OCI-LY7 (cell line): ENCODE measurements at regions of chr18 and their contacts with region 1.

Region 1: GRCh38 chr18:58438161-58438957 is 190.5 kb downstream of the ALPK2 start:
- DNase-seq: peak; percentile 0
- H3K4me3 ChIP-seq: peak overlapping the region; percentile 12
- H3K27ac ChIP-seq: no peak overlapping the region
- H3K4me1 ChIP-seq: no peaks in the 10 kb centered on the region
- CTCF ChIP-seq: no peak

Region 2: GRCh38 chr18:59273936-59274928 is 835.9 kb after region 1 on chr18:
- CTCF ChIA-PET with region 1: no interaction called
- POLR2A ChIA-PET with region 1: interaction called, 10 read pairs
- intact Hi-C with region 1: no loop called
- DNase-seq: no peak
- H3K4me3 ChIP-seq: no peak overlapping the region
- H3K27ac ChIP-seq: no peak overlapping the region
- H3K4me1 ChIP-seq: no peaks in the 10 kb centered on the region
- CTCF ChIP-seq: no peak